ENCODE measurements at regions of chr16 and their contacts with region 1.

Region 1: DNA sequence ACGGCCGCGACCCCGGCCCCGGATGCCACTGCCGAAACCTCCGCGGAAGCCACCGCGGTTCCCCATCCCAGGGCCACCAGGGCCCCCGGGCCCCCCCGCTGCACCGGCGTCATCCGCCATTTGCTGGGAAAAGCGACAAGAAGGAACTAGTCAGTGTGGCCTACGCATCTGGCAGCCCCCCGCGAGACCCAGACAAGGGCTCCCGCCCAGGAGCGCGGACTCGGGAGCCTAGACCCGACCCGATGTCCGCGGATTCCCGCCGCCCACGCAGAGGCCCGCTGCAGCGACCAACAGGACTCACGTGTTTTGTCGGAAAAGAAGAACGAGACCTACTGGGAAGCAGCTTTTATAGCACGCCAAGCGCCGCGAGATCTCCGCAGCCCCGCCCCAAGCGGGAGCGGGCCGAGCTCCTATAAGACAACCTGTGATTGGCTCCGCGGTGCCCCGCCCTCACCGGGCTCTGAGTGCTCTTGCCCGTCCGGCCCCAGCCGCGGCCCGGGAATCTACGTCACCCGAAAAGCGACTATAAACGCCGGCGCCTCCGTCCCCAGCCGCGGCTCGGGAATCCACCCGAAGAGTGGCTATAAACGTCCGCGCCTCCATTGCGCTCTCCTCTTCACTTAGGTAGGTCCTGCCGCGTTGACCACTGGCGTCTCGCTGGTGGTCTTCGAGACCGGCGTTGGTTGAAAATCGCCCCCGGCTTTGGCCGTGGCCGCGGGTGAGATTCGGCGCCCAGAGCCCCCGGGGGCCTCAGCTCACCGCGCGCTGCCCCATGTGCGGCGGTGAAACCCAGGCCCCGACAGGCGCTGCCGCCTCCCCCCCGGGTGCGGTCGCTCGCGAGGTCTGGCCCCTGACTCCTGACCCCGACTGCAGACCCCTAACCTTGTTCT is at the start of gene RPS2:
- DNase-seq: peak; percentile 86
- H3K4me3 ChIP-seq: peak within 1 kb of the TSS; percentile 92
- H3K27me3 ChIP-seq: no peaks in the 10 kb centered on the region
- CTCF ChIP-seq: no peak; the same call in 1 of the 2 replicates
- polyA plus RNA-seq, gene RPS2: 3,098 and 4,041 TPM in 2 replicates

Region 2: DNA sequence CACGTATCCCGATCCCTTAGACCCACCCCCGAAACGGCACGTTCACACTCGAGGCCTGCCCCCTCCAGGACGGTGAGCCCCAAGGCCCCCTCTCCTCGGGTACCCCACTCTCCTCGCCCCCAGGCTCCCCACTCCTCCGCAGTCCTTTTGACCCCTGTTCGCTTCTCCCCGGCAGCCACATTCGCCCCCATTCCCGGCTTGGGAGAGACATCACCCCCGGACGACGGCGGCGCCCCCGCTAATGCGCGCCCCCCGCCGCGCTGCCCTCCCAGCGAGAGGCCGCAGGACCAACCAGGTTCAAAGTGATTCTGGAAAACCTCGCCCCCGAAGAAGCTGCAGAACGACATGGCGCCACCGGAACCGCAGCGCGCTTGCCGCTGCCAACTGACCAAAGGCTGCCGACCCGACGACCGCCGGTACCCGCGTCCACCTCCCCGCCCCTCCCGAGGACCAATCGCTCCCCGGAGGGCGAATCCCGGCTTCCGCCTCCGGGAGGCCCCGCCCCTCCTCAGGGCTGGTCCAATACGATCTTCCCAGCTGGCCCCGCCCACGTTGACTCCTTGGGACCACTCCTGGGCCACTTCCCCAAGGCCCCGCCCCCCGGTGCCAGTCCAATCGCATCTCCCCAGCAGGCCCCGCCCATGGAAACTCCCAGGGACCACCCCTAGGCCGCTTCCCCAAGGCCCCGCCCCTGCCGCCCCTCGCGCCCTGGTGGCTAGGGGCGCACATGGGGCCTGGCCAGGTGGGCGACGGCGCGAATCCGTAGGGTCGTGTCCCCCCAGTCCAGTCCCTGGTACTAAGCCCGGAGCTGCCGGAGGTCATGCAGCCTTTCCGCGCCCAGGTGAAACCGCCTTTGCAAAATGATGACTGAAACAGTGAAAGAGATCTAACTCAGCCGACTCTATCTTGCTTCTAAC is 21.7 kb before region 1 on chr16 and contains the start of gene MSRB1:
- CTCF ChIA-PET with region 1: interaction called, 6 read pairs
- POLR2A ChIA-PET with region 1: interaction called, 10 read pairs
- DNase-seq: peak; percentile 85
- H3K4me3 ChIP-seq: peak within 1 kb of the TSS; percentile 81
- H3K27me3 ChIP-seq: no peaks in the 10 kb centered on the region
- CTCF ChIP-seq: no peak
- polyA plus RNA-seq, gene MSRB1: 44.4 and 61.9 TPM in 2 replicates

Region 3: DNA sequence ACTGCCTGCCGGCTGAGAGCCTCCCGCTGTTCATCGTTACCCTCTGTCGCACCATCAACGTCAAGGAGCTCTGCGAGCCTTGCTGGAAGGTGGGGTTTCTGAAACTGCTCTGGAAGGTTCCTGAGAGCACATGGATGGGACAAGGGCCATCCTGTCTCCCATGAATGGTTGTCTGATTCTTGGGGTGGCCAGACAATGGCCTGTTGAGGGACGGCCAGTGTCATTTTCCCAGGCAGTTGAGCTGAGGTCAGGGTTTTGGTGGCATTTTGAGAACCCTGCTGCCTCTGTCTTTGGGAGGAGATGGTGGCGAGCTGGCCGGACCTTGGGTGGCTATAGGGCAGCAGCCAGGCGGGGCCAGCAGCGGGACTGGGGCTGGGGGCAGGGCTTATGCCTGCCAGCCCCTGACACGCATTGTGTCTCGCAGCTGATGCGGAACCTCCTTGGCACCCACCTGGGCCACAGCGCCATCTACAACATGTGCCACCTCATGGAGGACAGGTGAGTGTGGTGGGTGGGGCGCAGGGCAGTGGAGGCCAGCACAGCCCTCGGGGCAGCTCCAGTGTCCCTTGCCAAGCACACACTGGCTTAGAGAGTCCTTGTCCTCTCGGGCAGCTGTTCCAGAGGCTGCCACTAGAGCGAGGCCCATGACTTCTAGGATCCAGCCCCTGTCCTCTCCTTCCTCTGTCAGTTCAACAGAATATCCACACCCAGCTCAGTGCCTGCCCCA is 92.1 kb after region 1 on chr16:
- CTCF ChIA-PET with region 1: no interaction called
- POLR2A ChIA-PET with region 1: interaction called, 15 read pairs
- DNase-seq: no peak
- H3K4me3 ChIP-seq: no peak overlapping the region
- H3K27me3 ChIP-seq: no peaks in the 10 kb centered on the region
- CTCF ChIP-seq: no peak

Region 4: DNA sequence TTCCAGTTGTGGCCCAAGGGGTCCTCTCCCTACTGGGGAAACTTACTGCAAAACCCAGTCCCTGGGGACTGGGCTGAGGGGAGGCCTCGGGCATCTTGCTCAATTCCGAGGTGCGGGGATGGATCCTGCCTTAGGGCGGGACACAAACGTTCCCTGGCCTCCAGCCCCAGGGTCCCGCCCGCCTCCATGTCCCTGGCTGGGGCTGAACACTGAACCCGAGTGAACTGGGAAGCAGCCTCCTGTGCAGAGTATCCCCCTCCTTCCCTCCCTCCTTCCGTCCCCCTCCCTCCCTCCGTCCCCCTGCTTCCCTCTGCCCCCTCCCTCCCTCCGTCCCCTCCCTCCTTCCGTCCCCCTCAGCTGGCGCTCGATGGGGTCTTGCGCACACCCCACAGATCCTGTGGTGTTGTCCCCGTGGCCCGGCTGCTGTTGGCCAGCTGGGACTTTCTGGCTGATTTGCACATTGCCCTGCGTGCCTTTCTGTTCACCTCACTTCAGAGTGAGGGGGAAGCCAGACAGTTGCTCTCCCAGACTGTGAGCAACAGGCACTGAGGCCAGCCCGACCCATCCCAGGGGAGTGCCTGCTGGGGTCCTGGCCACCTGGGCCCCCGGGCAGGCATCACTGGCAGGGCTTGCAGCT is 196.3 kb after region 1 on chr16:
- CTCF ChIA-PET with region 1: no interaction called
- POLR2A ChIA-PET with region 1: no interaction called
- DNase-seq: no peak
- H3K4me3 ChIP-seq: no peak overlapping the region
- H3K27me3 ChIP-seq: no peaks in the 10 kb centered on the region
- CTCF ChIP-seq: no peak